BJ (cell line): ENCODE measurements at regions of chr18 and their contacts with region 1.

Region 1: DNA sequence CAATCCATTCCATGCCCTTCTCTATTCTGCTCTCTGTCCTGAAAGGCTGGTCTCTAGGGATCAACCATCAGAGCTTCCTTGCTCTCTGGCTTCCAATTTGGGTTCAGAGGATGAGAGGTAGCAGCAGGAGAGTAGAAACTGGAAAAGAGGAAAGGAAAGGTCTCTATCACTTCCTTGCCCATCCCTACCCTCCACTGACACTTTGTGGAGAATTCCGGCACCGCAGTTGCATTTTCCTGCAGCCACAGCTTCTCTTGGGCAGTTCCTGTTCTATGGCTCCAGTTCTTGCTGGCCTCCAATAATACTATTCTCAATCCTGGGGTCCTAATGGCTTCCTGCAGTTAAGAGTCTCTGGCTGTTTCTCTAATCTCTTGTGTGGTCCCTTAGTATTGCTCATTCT is 13.3 kb upstream of the IMPACT start:
- DNase-seq: no peak
- H3K4me3 ChIP-seq: no peak overlapping the region
- H3K27me3 ChIP-seq: peaks cover 15% of the 10 kb centered on the region
- CTCF ChIP-seq: peak; percentile 51

Region 2: DNA sequence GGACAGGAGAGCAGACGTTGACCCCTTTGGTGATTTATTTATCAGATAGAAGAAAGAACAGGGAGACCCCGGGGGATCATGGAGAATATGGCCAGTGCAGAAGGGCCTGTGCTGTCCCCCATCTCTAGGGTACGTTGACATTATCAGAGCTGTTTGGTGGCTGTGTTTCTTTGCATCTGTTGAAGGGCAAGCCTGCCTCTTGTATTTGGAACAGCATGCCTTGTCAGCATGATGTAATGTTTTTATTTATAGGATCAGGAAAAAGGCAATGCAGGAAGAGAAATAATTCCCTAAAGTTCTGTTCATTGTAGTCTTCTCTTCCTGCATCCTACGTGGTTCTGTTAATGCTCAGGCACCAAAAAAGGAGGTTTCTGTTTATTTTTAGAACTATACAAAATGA is 324.1 kb before region 1 on chr18:
- CTCF ChIA-PET with region 1: no interaction called
- POLR2A ChIA-PET with region 1: no interaction called
- DNase-seq: no peak
- H3K4me3 ChIP-seq: no peak overlapping the region
- H3K27me3 ChIP-seq: no peaks in the 10 kb centered on the region
- CTCF ChIP-seq: no peak

Region 3: GRCh38 chr18:24112874-24113615 is 300.1 kb before region 1 on chr18:
- CTCF ChIA-PET with region 1: no interaction called
- POLR2A ChIA-PET with region 1: no interaction called
- DNase-seq: no peak
- H3K4me3 ChIP-seq: no peak overlapping the region
- H3K27me3 ChIP-seq: no peaks in the 10 kb centered on the region
- CTCF ChIP-seq: no peak

Region 4: GRCh38 chr18:24176727-24177416 is 236.3 kb before region 1 on chr18:
- CTCF ChIA-PET with region 1: interaction called, 15 read pairs
- POLR2A ChIA-PET with region 1: no interaction called
- DNase-seq: no peak
- H3K4me3 ChIP-seq: no peak overlapping the region
- H3K27me3 ChIP-seq: no peaks in the 10 kb centered on the region
- CTCF ChIP-seq: peak; percentile 85

Region 5: GRCh38 chr18:24362758-24363157 is 50.4 kb before region 1 on chr18:
- CTCF ChIA-PET with region 1: interaction called, 81 read pairs
- POLR2A ChIA-PET with region 1: no interaction called
- DNase-seq: no peak
- H3K4me3 ChIP-seq: no peak overlapping the region
- H3K27me3 ChIP-seq: no peaks in the 10 kb centered on the region
- CTCF ChIP-seq: no peak

Region 6: DNA sequence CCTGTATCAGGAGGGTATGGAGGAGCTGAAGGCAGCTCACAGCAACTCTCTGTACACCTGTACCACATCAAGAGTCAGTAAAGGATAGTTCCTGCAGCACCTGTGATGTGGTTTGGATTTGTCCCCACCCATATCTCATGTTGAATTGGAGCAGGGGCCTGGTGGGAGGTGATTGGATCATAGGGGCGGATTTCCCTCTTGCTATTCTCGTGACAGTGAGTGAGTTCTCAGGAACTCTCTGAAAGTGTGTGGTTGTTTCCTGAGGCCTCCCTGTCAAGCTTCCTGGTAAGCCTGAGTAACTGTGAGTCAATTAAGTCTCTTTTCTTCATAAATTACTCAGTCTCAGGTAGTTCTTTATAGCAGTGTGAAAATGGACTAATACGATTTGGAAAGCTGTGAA is 44.4 kb before region 1 on chr18:
- CTCF ChIA-PET with region 1: interaction called, 81 read pairs
- POLR2A ChIA-PET with region 1: no interaction called
- DNase-seq: no peak
- H3K4me3 ChIP-seq: no peak overlapping the region
- H3K27me3 ChIP-seq: no peaks in the 10 kb centered on the region
- CTCF ChIP-seq: no peak

Region 7: DNA sequence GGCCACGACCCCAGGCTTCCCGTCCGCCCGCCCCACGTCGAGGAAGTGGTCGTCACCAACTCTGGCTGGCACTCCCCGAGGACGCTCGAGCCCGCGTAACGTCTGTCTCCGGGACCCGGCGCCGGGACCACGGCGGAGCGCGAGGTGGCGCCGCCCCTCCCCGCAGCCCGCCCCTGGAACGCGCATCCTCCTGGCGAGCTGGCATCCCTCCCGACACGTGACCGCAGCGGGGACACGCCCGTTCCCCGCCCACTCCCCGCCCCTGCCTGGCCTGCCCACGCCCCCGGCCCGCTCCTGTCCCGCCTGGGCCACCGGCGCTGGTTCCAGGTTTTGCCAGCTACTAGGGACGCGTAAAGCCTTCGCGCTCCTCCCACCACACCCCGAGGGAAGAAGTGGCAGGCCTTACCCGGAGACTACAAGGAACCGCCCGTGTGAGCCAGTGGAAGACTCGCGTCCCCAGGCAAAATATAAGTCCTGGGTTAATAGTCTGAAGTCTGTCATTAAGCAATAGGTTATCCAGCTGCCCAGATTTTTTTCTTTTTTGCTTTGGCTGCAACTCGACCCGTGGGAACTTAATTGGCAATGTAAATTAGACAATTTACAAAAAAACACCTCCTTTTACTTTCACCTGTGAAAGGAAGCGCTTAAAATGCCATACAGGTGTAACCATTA is 15.3 kb before region 1 on chr18 and contains the start of gene OSBPL1A:
- CTCF ChIA-PET with region 1: interaction called, 10 read pairs
- POLR2A ChIA-PET with region 1: no interaction called
- DNase-seq: peak; percentile 45
- H3K4me3 ChIP-seq: peak within 1 kb of the TSS; percentile 72
- H3K27me3 ChIP-seq: no peaks in the 10 kb centered on the region
- CTCF ChIP-seq: no peak
- polyA plus RNA-seq, gene OSBPL1A: 20.1 and 30.9 TPM in 2 replicates

Region 8: GRCh38 chr18:24631243-24632025 is 218.3 kb after region 1 on chr18:
- CTCF ChIA-PET with region 1: no interaction called
- POLR2A ChIA-PET with region 1: no interaction called
- DNase-seq: no peak
- H3K4me3 ChIP-seq: no peak overlapping the region
- H3K27me3 ChIP-seq: no peaks in the 10 kb centered on the region
- CTCF ChIP-seq: no peak

Region 9: DNA sequence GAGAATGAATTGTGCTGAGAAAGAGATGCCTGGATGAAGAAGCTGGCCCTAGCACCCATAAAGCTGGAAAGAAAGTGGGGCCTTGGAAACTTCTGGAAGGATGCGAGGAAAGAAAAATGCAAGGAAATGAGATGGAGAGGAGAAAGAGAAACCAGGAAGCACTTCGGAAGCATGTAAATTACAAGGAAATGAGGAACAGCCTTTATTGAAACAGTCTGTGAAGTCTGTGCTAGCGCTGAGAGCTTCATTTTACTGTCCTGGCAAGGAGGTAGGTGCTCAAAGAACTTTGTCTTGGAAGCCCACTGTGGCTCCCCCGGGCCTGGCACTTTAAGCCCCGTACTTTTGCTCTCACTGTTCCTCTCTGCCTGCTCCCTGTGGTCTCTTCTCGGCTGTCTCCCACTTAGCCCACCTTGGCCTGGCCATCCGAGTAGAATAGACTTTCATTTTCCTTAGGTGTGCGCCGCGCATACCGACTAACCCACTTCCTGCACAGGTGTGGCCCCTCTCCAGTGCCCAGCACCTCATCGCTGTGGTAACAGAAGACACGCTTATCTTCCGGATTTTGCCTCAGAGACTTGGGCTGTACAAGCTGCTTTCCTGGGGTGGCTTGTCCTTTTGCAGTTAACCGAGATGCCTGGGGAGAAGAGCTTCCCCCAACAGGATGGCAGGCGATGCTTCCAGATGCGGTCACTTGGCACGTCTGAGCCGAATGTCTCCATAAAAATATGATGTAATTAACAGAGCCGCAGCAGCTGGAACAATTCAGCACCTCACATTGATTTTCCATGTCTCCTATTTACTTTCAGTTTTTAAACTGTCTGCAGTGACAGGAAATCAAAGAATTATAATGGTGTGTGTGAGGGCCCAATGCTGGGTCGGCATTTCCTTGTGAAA is 246.9 kb after region 1 on chr18:
- CTCF ChIA-PET with region 1: no interaction called
- POLR2A ChIA-PET with region 1: no interaction called
- DNase-seq: no peak
- H3K4me3 ChIP-seq: peak overlapping the region; percentile 22
- H3K27me3 ChIP-seq: peaks cover 4% of the 10 kb centered on the region
- CTCF ChIP-seq: no peak